ENCODE measurements at regions of chr9 and their contacts with region 1.

Region 1: GRCh38 chr9:34211395-34211794 is 32.6 kb downstream of the UBAP1 start:
- DNase-seq: no peak
- H3K4me3 Mint-ChIP-seq: no peak overlapping the region
- H3K27ac Mint-ChIP-seq: peak overlapping the region; percentile 25
- H3K4me1 Mint-ChIP-seq: peaks cover 17% of the 10 kb centered on the region
- H3K27me3 Mint-ChIP-seq: no peaks in the 10 kb centered on the region
- CTCF ChIP-seq: no peak

Region 2: DNA sequence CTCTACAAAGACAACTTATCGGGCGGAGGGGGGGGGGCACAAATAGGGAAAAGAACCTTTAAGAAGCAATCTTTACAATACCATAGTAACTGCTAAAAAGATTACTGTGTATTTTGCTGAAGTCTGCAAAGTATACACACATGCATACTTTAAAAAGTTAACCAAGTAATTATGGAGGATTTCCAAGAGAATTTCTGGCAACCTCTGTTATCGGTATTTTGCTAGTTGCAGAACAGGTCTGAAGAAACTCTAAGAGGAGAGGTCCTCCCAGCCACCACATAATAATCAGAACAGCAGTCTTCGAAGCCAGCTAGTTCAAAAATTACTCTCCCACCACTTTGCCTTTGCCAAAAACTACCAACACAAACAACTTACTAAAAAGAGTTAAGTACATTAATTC is 218.8 kb before region 1 on chr9:
- CTCF ChIA-PET with region 1: no interaction called
- POLR2A ChIA-PET with region 1: no interaction called
- intact Hi-C with region 1: no loop called
- DNase-seq: no peak
- H3K4me3 Mint-ChIP-seq: no peak overlapping the region
- H3K27ac Mint-ChIP-seq: no peak overlapping the region
- H3K4me1 Mint-ChIP-seq: peaks cover 8% of the 10 kb centered on the region
- H3K27me3 Mint-ChIP-seq: no peaks in the 10 kb centered on the region
- CTCF ChIP-seq: no peak

Region 3: DNA sequence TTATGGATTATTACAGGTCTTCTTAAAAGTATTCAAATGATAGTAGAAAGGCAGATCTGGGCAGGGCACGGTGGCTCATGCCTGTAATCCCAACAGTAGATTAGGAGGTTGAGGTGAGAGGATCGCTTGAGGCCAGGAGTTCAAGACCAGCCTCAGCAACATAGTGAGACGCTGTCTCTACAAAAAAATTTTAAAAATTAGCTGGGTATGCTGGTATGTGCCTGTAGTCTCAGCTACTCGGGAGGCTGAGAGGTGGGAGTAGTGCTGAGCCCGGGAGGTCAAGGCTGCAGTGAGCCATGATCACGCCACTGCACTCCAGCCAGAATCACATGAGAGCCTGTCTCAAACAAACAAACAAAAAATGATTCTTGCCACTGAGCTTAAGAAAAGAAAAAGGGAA is 11.1 kb after region 1 on chr9:
- CTCF ChIA-PET with region 1: no interaction called
- POLR2A ChIA-PET with region 1: interaction called, 13 read pairs
- intact Hi-C with region 1: no loop called
- DNase-seq: no peak
- H3K4me3 Mint-ChIP-seq: no peak overlapping the region
- H3K27ac Mint-ChIP-seq: peak overlapping the region; percentile 61
- H3K4me1 Mint-ChIP-seq: peaks cover 13% of the 10 kb centered on the region
- H3K27me3 Mint-ChIP-seq: no peaks in the 10 kb centered on the region
- CTCF ChIP-seq: no peak